Psoas muscle (tissue), 8 donors: ENCODE measurements at regions of chr16 and their contacts with region 1.

Region 1: DNA sequence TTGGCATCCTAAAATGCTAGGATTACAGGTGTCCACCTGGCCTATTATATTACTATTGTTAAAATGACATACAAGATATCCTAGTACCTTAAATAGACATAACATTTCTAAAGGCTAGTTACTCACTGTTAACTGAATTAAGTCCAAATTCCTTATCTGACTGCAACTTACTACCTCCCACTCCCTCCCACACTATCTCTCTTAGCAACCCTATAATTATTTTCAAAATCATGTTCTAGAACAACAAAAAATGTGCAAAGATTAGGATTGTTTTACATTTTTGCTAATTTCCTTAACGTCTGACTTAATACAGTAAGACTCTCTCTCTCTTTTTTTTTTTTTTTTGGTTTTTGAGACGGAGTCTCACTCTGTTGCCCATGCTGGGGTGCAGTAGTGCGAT is 2.2 kb upstream of the ATF7IP2 start:
- DNase-seq: no peak
- ATAC-seq: no peak
- H3K4me3 ChIP-seq: no peak overlapping the region
- H3K27ac ChIP-seq: no peak overlapping the region
- H3K4me1 ChIP-seq: no peaks in the 10 kb centered on the region
- H3K27me3 ChIP-seq: peaks cover 3 to 8% (median 4%) of the 10 kb centered on the region in 3 donors
- CTCF ChIP-seq: no peak

Region 2: GRCh38 chr16:10322723-10323527 is 60.7 kb before region 1 on chr16:
- intact Hi-C with region 1: loop called in 1 of 2 experiments (anchors 2 kb)
- DNase-seq: no peak
- ATAC-seq: no peak
- H3K4me3 ChIP-seq: no peak overlapping the region
- H3K27ac ChIP-seq: no peak overlapping the region
- H3K4me1 ChIP-seq: no peaks in the 10 kb centered on the region
- H3K27me3 ChIP-seq: no peaks in the 10 kb centered on the region
- CTCF ChIP-seq: no peak